ENCODE measurements at regions of chr15 and their contacts with region 1.

Region 1: DNA sequence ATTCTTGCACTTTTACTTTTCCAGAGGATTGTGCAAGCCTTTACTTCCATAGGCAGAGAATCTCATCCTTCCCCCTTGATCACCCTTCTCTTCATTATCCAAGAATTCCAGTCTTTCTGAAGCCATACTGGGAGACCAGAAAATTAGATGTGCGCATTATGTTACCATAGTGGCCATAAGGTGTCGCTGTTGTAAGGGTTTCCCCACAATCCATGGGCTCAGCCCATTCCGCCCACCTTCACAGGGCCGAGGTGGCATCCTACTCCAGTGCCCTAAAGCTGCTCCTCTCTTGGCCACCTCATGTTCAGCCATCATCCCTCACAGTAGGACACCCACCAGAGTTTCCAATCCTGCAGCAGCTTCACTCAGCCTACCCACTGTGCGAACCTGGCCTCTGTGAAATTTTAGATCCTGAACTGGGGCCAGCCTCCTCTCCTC is 35.0 kb downstream of the CTSH start:
- H3K4me3 ChIP-seq: no peak overlapping the region
- H3K27ac ChIP-seq: no peak overlapping the region
- H3K4me1 ChIP-seq: no peaks in the 10 kb centered on the region
- CTCF ChIP-seq: peak; percentile 58

Region 2: DNA sequence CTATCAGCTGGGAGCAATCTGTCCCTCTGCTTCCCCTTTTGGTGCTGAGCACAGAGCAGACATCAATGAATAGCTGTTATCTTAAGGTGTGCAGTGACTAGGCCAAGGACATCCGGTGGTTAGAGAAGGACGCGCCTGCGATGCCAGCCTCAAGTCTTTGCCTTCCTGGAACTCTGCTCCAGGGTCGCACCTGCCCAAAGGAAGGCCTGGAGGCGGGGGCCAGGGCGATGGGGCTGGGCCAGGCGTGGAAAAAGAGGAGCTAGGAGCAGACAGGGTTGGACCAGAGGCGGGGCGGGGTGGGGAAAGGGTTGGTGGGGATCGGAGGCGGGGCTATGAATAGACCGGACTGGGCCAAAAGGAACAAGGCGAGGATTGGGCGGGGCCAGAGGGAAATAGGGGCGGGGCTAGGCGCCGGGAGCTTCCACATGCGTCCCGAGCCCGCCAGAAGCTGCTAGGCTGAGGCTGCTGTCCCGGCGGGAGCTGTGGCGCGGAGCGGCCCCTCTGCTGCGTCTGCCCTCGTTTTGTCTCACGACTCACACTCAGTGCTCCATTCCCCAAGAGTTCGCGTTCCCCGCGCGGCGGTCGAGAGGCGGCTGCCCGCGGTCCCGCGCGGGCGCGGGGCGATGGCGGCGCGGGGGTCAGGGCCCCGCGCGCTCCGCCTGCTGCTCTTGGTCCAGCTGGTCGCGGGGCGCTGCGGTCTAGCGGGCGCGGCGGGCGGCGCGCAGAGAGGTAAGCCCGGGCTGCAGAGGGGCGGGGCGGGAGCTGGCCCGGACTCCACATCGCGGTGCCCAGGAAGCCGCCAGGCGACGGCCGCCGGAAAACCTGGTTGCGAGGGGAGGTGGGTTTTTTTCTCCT is 344.5 kb before region 1 on chr15 and contains the start of gene CHRNA5:
- CTCF ChIA-PET with region 1: no interaction called
- POLR2A ChIA-PET with region 1: interaction called, 11 read pairs
- H3K4me3 ChIP-seq: peak within 1 kb of the TSS; percentile 57
- H3K27ac ChIP-seq: peak within 1 kb of the TSS; percentile 93
- H3K4me1 ChIP-seq: peaks cover 4% of the 10 kb centered on the region; the same call in 1 of the 2 replicates
- CTCF ChIP-seq: no peak

Region 3: DNA sequence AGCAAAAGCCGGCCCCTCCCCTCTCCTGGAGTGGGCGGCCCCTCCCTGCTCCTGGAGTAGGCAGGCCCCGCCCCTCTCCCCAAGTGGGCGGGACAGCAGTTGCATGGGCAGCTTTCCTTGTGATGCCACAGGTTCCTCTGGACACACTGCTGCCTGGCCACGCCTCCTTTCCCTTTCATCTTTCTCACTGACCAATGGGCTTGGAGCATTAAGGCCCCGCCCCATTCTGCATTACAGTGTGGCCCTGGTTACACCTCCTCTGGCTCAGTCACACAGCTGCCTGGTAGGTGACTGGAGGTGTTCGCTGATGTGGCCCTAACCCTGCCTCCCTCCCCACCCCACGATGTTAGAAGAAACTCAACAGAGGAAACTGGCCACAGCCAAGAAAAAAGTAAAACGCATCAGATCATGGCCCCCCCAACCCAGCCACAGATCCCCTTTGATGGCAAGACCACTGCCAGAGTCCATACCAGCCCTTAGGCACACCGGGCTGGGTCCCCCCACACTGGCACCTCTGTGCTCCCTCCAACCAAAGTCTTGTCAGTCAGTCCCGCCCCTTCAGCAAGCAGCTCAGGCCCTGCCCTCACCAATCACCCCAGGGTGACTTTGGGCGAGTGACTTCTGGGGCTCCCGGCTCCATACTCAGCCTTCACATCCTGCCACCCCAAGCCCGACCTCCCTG is 182.8 kb before region 1 on chr15:
- CTCF ChIA-PET with region 1: no interaction called
- POLR2A ChIA-PET with region 1: no interaction called
- H3K4me3 ChIP-seq: no peak overlapping the region
- H3K27ac ChIP-seq: no peak overlapping the region
- H3K4me1 ChIP-seq: no peaks in the 10 kb centered on the region
- CTCF ChIP-seq: no peak

Region 4: DNA sequence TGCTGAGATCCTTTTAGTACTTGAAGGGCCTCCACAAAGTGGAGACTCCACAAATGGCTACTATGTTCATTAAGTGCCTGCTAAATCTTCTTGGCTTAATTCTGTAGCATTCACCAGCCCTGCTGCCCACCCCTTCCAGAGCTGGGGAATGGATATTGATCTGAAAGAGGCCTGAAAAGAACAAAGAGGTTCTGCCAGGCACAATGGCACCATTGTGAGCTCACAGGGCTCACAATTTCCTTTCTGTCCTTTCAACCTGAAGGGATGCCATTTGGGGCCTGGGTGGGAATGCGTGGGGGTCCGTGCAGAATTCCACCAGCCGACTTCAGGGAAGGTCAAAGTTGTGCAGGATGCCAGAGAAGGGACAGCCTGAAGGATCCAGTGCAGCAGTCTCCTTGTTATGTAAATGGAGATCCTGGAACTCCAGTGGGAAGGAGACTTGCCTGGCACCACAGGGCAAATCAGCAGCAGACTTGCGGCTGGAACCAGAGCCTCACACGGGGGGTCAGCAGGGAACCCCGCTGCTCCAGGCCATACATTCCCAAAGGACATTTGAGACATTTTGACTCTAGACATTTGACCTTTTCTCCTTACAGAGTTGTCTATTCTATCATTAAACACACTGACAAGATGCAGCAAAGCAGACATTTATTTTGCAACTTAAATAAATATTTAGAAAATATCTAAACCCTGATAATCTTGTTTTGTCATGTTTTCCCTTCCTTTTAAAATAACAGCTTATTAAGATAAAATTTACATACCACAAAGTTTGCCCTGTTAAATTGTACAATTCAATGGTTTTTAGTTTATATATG is 58.7 kb before region 1 on chr15:
- CTCF ChIA-PET with region 1: no interaction called
- POLR2A ChIA-PET with region 1: no interaction called
- H3K4me3 ChIP-seq: no peak overlapping the region
- H3K27ac ChIP-seq: no peak overlapping the region
- H3K4me1 ChIP-seq: no peaks in the 10 kb centered on the region
- CTCF ChIP-seq: no peak

Region 5: DNA sequence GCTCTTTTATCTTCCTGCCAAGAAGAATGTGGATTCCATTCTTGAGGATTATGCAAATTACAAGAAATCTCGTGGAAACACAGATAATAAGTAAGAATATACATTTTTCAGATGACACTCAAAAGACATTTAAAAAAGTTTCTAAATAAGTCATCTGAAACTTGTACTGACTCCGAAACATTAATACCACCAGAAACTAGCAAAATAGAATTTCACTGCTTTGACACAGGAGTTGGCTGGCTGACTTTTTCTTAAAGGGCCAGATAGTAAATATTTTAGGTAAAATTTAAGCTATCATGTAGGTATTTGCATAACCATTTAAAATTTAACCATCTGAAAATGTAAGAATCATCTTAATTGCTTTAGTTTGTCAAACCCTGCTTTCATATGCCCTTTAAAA is 16.3 kb before region 1 on chr15:
- CTCF ChIA-PET with region 1: interaction called, 52 read pairs
- POLR2A ChIA-PET with region 1: interaction called, 3 read pairs
- H3K4me3 ChIP-seq: no peak overlapping the region
- H3K27ac ChIP-seq: no peak overlapping the region
- H3K4me1 ChIP-seq: no peaks in the 10 kb centered on the region
- CTCF ChIP-seq: no peak

Region 6: DNA sequence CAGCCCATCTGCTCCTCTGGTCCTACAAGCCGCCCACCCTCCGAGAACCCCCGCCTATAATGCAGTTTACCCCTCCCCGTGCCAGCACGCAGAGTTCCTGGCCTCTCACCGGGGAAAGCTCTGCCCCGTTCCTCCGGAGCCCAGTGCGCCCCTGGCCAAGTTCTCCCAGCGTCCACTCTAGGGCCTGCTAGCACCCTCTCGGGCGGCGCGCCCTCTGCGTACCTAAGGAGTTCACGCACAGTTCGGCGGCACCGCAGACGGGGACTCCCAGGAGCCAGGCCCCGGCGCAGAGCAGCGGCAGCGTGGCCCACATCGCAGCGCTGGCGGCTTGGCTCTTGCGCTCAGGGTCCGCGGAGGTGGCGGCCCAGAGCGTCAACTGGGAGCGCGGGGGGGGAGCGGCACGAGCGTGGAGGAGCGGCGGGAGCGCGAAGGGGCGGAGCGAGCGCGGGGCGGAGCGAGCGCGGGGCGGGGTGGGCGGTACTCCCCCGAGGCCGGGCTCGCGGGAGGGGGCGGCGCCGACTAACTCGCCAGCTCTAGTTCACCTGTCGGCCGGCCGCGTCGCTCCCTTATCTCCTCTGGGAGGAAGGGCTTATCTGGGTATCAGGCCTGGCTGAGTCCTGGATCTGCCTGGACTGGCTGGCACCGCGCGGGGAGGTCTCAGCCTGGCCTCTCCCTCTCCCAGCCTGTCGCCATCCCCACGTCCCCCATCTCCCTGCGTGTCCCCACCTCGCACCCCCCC is 35.0 kb after region 1 on chr15 and contains the start of gene CTSH:
- CTCF ChIA-PET with region 1: interaction called, 17 read pairs
- POLR2A ChIA-PET with region 1: no interaction called
- H3K4me3 ChIP-seq: peak within 1 kb of the TSS; percentile 41
- H3K27ac ChIP-seq: peak within 1 kb of the TSS; percentile 66
- H3K4me1 ChIP-seq: 0 out of 2 replicates have a peak, but pooled peaks cover 2% of the 10 kb centered on the region
- CTCF ChIP-seq: no peak

Region 7: GRCh38 chr15:79028411-79028964 is 118.7 kb after region 1 on chr15:
- CTCF ChIA-PET with region 1: interaction called, 25 read pairs
- POLR2A ChIA-PET with region 1: no interaction called
- H3K4me3 ChIP-seq: no peak overlapping the region
- H3K27ac ChIP-seq: no peak overlapping the region
- H3K4me1 ChIP-seq: no peaks in the 10 kb centered on the region
- CTCF ChIP-seq: peak; percentile 55